Panc1 (cell line): ENCODE measurements at regions of chr11 and their contacts with region 1.

Region 1: GRCh38 chr11:101974255-101974654 is 57.9 kb upstream of the ANGPTL5 start:
- DNase-seq: peak; percentile 4
- ATAC-seq: peak; percentile 87
- H3K4me3 ChIP-seq: no peak overlapping the region
- H3K27ac ChIP-seq: no peak overlapping the region; the same call in 1 of the 2 replicates
- H3K4me1 ChIP-seq: peaks cover 3% of the 10 kb centered on the region; the same call in 1 of the 2 replicates
- H3K27me3 ChIP-seq: no peaks in the 10 kb centered on the region
- CTCF ChIP-seq: peak; percentile 59; the same call in 1 of the 2 replicates

Region 2: DNA sequence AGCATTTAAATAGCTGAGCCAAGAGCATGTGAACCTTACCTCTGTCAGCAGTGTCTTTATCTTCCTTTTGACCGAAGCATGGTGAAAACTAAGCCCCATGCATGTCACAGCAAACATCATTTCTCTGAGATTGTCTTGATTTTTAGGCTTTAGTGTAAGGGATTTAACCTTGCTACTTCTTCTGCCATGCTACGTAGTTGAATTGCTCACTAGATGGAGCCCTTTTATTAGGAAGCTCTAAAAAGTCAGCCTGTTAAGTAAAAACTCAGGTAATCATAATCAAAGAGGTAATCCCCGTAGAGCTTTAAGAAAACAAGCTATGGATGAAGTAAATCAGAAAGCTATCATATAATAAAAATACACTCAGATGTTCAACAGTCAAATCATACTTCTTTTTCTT is 994.1 kb before region 1 on chr11:
- CTCF ChIA-PET with region 1: interaction called, 12 read pairs
- POLR2A ChIA-PET with region 1: no interaction called
- in situ Hi-C with region 1: no loop called
- intact Hi-C with region 1: no loop called
- DNase-seq: no peak
- ATAC-seq: no peak
- H3K4me3 ChIP-seq: no peak overlapping the region
- H3K27ac ChIP-seq: no peak overlapping the region
- H3K4me1 ChIP-seq: no peaks in the 10 kb centered on the region
- H3K27me3 ChIP-seq: no peaks in the 10 kb centered on the region
- CTCF ChIP-seq: peak; percentile 53; the same call in 1 of the 2 replicates

Region 3: DNA sequence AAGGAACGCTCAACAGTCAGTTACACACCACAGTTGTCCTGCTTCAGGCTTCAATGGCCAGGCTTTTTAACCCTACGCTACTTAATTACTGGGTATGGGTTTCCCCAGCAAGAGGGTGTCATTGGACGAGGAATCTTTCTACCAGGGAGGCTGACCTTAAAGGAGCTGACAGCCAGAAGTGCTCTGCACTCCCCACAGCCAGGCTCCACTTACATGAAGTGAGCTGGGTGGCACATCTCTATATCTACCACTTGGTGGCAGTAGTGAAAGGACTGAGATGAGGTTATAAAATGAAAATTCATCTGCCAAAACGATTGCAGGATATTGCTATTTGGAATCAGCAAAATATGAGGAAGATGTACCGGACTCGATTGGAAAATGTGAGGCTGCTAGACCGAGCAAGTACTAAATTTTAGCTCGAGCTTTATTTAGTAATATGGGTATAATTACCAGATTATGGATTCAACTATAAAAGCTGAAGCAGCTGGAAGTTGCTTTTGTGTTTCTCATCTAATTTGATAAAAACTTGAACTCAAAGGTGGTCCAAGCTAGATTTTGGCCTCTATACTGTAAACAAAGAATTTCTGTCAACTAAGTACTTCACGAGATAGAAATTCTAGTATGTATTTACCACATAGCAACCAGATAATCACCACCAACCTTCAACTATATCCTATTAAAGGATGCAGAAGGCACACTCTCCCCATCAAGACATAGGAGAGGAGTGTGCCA is 113.4 kb before region 1 on chr11:
- CTCF ChIA-PET with region 1: interaction called, 5 read pairs
- POLR2A ChIA-PET with region 1: no interaction called
- in situ Hi-C with region 1: no loop called
- intact Hi-C with region 1: loop called (anchors 1 kb)
- DNase-seq: peak; percentile 45
- ATAC-seq: peak; percentile 92
- H3K4me3 ChIP-seq: no peak overlapping the region
- H3K27ac ChIP-seq: peak overlapping the region; percentile 40; the same call in 1 of the 2 replicates
- H3K4me1 ChIP-seq: peaks cover 13% of the 10 kb centered on the region; the same call in 1 of the 2 replicates
- H3K27me3 ChIP-seq: no peaks in the 10 kb centered on the region
- CTCF ChIP-seq: peak; percentile 92

Region 4: DNA sequence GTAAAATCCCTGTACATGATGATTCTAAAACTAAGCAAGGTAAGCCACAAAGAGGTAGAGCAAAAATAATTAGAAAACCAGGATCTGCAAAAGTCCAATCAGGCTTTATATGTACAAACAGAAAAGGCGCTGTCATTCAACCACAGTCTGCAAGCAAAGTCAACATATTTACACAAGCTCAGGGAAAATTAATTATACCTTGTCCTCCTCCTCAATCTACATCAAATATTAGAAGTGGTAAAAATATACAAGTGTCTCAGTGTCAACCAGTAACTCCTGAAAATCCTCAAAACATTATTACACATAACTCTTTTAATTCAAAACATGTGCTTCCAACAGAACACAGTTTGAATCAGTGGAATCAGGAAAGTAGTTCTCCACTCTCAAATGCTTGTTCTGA is 11.0 kb before region 1 on chr11:
- CTCF ChIA-PET with region 1: no interaction called
- POLR2A ChIA-PET with region 1: no interaction called
- in situ Hi-C with region 1: no loop called
- intact Hi-C with region 1: no loop called
- DNase-seq: no peak
- ATAC-seq: no peak
- H3K4me3 ChIP-seq: no peak overlapping the region
- H3K27ac ChIP-seq: no peak overlapping the region
- H3K4me1 ChIP-seq: no peaks in the 10 kb centered on the region
- H3K27me3 ChIP-seq: no peaks in the 10 kb centered on the region
- CTCF ChIP-seq: no peak

Region 5: GRCh38 chr11:102007567-102008437 is 33.5 kb after region 1 on chr11:
- CTCF ChIA-PET with region 1: interaction called, 13 read pairs
- POLR2A ChIA-PET with region 1: no interaction called
- in situ Hi-C with region 1: no loop called
- intact Hi-C with region 1: no loop called
- DNase-seq: peak; percentile 88
- ATAC-seq: peak; percentile 80
- H3K4me3 ChIP-seq: no peak overlapping the region
- H3K27ac ChIP-seq: peak overlapping the region; percentile 69
- H3K4me1 ChIP-seq: peaks cover 32% of the 10 kb centered on the region
- H3K27me3 ChIP-seq: no peaks in the 10 kb centered on the region
- CTCF ChIP-seq: peak; percentile 50; the same call in 1 of the 2 replicates

Region 6: DNA sequence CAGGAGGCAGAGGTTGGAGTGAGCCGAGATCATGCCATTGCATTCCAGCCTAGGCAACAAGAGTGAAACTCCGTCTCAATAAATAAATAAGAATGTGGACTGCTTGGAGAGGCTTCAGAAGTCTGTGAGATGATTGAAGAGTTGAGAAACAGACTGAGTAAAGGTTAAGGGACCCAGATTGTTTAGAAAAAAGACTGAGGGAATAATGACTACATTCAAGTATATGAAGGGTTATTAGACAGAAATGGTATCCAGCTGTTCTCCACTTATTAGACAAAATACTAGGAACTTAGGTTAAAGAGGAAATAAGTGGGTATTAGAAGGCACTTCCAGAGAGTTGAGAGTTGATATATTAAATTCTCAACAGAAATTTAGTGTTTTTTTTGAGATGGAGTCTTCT is 125.5 kb after region 1 on chr11:
- CTCF ChIA-PET with region 1: no interaction called
- POLR2A ChIA-PET with region 1: interaction called, 11 read pairs
- in situ Hi-C with region 1: no loop called
- intact Hi-C with region 1: no loop called
- DNase-seq: no peak
- ATAC-seq: no peak
- H3K4me3 ChIP-seq: no peak overlapping the region
- H3K27ac ChIP-seq: no peak overlapping the region
- H3K4me1 ChIP-seq: no peaks in the 10 kb centered on the region
- H3K27me3 ChIP-seq: no peaks in the 10 kb centered on the region
- CTCF ChIP-seq: no peak